Heart right ventricle (tissue), 16 donors: ENCODE measurements at regions of chr2 and their contacts with region 1.

Region 1: DNA sequence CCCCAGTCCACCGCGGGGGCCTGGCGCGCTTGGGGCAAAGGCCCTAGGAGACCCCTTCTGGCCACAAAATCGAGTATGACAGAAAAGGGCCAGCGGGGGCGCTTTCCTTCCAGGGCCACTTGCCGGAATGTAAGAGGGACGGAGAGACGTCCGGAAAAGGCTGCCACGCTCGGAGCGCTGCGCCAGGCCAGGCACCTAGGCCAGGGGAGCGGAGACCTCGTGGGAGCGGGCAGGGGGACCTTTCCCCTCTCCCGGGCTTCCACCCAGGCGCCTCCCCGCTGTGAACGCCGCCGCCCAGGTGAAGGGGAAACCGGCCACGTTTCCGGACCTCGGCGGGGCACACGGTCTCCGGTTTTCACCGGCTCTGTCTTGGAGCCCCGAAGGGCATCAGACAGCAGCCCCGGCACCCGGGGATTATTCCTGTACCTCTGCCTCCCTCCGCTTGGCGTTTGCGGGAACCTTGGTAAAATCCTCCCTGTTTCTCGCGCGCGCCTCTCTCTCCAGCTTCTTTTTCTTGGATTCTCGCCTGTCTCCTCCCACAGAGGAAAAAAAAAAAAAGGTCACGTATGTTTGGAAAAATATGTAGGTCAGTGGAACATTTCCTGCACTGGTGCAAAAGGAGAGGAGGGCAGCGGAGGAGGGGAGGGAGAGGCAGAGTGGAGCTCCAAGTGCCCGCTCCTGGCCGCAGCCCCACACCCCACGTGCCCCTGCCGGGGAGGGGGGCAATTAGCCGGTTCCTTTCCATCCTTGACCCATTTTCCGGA is 1.2 kb upstream of the NPAS2 start:
- DNase-seq: peak; percentile 67 to 69
- ATAC-seq: peak; percentile 67 to 87 (median 74)
- H3K4me3 ChIP-seq: peak overlapping the region; percentile 65 to 91 (median 80)
- H3K27ac ChIP-seq: peak overlapping the region; percentile 84 to 98 (median 92)
- H3K4me1 ChIP-seq: peaks cover 7 to 76% (median 38%) of the 10 kb centered on the region in 9 donors
- H3K27me3 ChIP-seq: peaks cover 0 to 63% (median 0%) of the 10 kb centered on the region in 7 donors
- CTCF ChIP-seq: peak in 6 of 9 donors; percentile 17 to 46 (median 34)

Region 2: GRCh38 chr2:100730346-100730745 is 88.4 kb before region 1 on chr2:
- intact Hi-C with region 1: loop called in 7 of 10 experiments (anchors 2 to 5 kb)
- DNase-seq: peak; percentile 58 to 61
- ATAC-seq: peak; percentile 69 to 90 (median 80)
- H3K4me3 ChIP-seq: no peak overlapping the region
- H3K27ac ChIP-seq: no peak overlapping the region
- H3K4me1 ChIP-seq: peaks cover 4 to 14% (median 11%) of the 10 kb centered on the region in 9 donors
- H3K27me3 ChIP-seq: no peaks in the 10 kb centered on the region
- CTCF ChIP-seq: peak; percentile 23 to 84 (median 71)

Region 3: DNA sequence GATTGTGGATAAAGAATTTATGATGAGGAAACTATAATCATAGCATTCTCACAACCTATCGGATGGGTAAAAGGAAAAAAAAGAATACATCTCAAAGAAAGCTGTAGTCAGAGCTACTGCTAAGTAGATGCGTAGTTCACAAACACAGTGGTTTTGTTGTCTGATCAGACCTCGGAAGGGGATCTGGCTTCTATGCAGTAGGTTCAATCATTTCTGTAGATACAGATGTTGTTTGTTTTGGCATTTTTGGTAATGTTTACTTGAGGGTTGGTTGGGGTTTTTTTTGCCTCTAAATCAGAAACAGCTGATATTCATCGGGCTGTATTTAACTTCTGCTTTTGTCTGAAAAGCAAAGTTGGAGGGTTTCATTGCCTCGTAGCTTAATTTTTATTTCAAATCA is 43.3 kb after region 1 on chr2:
- intact Hi-C with region 1: loop called in 1 of 10 experiments (anchors 5 kb)
- DNase-seq: no peak
- ATAC-seq: no peak
- H3K4me3 ChIP-seq: no peak overlapping the region
- H3K27ac ChIP-seq: no peak overlapping the region
- H3K4me1 ChIP-seq: peaks cover 0 to 53% (median 7%) of the 10 kb centered on the region in 9 donors
- H3K27me3 ChIP-seq: no peaks in the 10 kb centered on the region
- CTCF ChIP-seq: no peak

Region 4: GRCh38 chr2:100893392-100894089 is 74.8 kb after region 1 on chr2:
- intact Hi-C with region 1: loop called in 2 of 10 experiments (anchors 5 kb)
- DNase-seq: no peak
- ATAC-seq: peak in 6 of 8 donors; percentile 10 to 80 (median 56)
- H3K4me3 ChIP-seq: no peak overlapping the region
- H3K27ac ChIP-seq: peak overlapping the region in 9 of 10 donors; percentile 38 to 77 (median 72)
- H3K4me1 ChIP-seq: peaks cover 7 to 69% (median 34%) of the 10 kb centered on the region in 9 donors
- H3K27me3 ChIP-seq: no peaks in the 10 kb centered on the region
- CTCF ChIP-seq: no peak

Region 5: GRCh38 chr2:100984892-100985379 is 166.1 kb after region 1 on chr2:
- intact Hi-C with region 1: loop called in 4 of 10 experiments (anchors 1 to 10 kb)
- DNase-seq: peak; percentile 71 to 79
- ATAC-seq: peak; percentile 53 to 85 (median 68)
- H3K4me3 ChIP-seq: no peak overlapping the region
- H3K27ac ChIP-seq: peak overlapping the region in 2 of 10 donors; percentile 9 to 62
- H3K4me1 ChIP-seq: peaks cover 0 to 19% (median 0%) of the 10 kb centered on the region in 9 donors
- H3K27me3 ChIP-seq: no peaks in the 10 kb centered on the region
- CTCF ChIP-seq: peak; percentile 84 to 95 (median 93)